CD4-positive, alpha-beta T cell (primary cell): ENCODE measurements at regions of chr1 and their contacts with region 1.

Region 1: GRCh38 chr1:69700770-69701169 is 133.0 kb downstream of the LRRC7 start:
- DNase-seq: peak in 1 of 14 experiments; percentile 4
- ATAC-seq: no peak
- H3K4me3 ChIP-seq: no peak overlapping the region
- H3K4me3 Mint-ChIP-seq: no peak overlapping the region
- H3K27ac ChIP-seq: no peak overlapping the region
- H3K27ac Mint-ChIP-seq: no peak overlapping the region
- H3K4me1 ChIP-seq: no peaks in the 10 kb centered on the region
- H3K4me1 Mint-ChIP-seq: no peaks in the 10 kb centered on the region
- H3K27me3 ChIP-seq: no peaks in the 10 kb centered on the region
- H3K27me3 Mint-ChIP-seq: no peaks in the 10 kb centered on the region
- CTCF ChIP-seq: no peak

Region 2: DNA sequence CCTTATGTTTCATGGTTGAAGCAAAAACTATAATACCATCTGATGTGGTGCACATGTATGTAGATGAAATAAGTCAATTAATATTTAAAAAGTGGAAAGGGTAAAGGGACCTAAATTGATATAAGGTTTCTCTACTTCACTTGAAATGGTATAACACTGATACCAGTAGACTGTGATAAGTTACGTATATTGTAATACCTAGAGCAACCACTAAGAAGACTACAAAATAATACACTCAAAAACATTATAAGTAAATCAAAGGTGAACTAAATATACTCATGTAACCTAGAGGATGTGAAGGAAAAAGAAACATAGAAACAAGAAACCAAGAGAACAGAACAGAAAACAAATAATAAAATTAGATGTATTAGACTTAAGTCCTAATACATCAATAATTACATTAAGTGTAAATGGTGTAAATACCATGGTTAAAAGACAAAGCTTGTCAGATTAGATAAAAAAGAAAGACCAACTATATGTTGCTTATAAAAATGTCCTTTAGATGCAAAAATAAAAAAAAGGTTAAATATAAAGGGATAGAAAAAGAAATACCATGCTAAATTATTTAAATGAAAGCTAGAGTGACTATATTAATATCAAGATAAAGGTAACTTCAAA is 14.3 kb before region 1 on chr1:
- CTCF ChIA-PET with region 1: no interaction called
- POLR2A ChIA-PET with region 1: no interaction called
- intact Hi-C with region 1: no loop called
- DNase-seq: no peak
- ATAC-seq: no peak
- H3K4me3 ChIP-seq: no peak overlapping the region
- H3K4me3 Mint-ChIP-seq: no peak overlapping the region
- H3K27ac ChIP-seq: no peak overlapping the region
- H3K27ac Mint-ChIP-seq: no peak overlapping the region
- H3K4me1 ChIP-seq: no peaks in the 10 kb centered on the region
- H3K4me1 Mint-ChIP-seq: no peaks in the 10 kb centered on the region
- H3K27me3 ChIP-seq: no peaks in the 10 kb centered on the region
- H3K27me3 Mint-ChIP-seq: no peaks in the 10 kb centered on the region
- CTCF ChIP-seq: no peak

Region 3: GRCh38 chr1:69765941-69766340 is 65.2 kb after region 1 on chr1:
- CTCF ChIA-PET with region 1: no interaction called
- POLR2A ChIA-PET with region 1: no interaction called
- intact Hi-C with region 1: loop called in 1 of 2 experiments (anchors 10 kb)
- DNase-seq: no peak
- ATAC-seq: no peak
- H3K4me3 ChIP-seq: no peak overlapping the region
- H3K4me3 Mint-ChIP-seq: no peak overlapping the region
- H3K27ac ChIP-seq: no peak overlapping the region
- H3K27ac Mint-ChIP-seq: no peak overlapping the region
- H3K4me1 ChIP-seq: no peaks in the 10 kb centered on the region
- H3K4me1 Mint-ChIP-seq: no peaks in the 10 kb centered on the region
- H3K27me3 ChIP-seq: no peaks in the 10 kb centered on the region
- H3K27me3 Mint-ChIP-seq: no peaks in the 10 kb centered on the region
- CTCF ChIP-seq: no peak

Region 4: DNA sequence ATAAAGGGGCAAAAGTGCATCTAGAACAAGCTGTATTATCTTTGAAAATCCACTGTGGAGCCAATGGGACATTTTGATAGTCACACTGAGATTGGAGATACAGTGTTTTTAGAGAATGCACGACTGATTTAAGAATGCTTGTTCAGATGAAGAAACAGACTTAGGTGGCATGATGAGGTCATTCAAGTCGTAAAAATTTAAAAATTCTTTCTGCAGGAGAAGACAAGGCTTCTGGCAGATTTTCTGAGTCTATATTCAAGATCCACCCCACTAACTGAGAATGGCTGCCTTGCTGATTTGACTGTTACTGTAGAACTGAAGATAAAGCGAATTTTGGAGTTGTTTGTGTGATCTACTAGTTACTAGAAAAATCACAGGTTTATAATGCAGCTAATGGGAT is 177.6 kb after region 1 on chr1:
- CTCF ChIA-PET with region 1: no interaction called
- POLR2A ChIA-PET with region 1: no interaction called
- intact Hi-C with region 1: no loop called
- DNase-seq: no peak
- ATAC-seq: no peak
- H3K4me3 ChIP-seq: no peak overlapping the region
- H3K4me3 Mint-ChIP-seq: no peak overlapping the region
- H3K27ac ChIP-seq: no peak overlapping the region
- H3K27ac Mint-ChIP-seq: no peak overlapping the region
- H3K4me1 ChIP-seq: no peaks in the 10 kb centered on the region
- H3K4me1 Mint-ChIP-seq: no peaks in the 10 kb centered on the region
- H3K27me3 ChIP-seq: no peaks in the 10 kb centered on the region
- H3K27me3 Mint-ChIP-seq: no peaks in the 10 kb centered on the region
- CTCF ChIP-seq: no peak